Activated CD8-positive, alpha-beta T cell treated with anti-CD3 and anti-CD28 coated beads for 36 hours (primary cell): ENCODE measurements at regions of chr5 and their contacts with region 1.

Region 1: DNA sequence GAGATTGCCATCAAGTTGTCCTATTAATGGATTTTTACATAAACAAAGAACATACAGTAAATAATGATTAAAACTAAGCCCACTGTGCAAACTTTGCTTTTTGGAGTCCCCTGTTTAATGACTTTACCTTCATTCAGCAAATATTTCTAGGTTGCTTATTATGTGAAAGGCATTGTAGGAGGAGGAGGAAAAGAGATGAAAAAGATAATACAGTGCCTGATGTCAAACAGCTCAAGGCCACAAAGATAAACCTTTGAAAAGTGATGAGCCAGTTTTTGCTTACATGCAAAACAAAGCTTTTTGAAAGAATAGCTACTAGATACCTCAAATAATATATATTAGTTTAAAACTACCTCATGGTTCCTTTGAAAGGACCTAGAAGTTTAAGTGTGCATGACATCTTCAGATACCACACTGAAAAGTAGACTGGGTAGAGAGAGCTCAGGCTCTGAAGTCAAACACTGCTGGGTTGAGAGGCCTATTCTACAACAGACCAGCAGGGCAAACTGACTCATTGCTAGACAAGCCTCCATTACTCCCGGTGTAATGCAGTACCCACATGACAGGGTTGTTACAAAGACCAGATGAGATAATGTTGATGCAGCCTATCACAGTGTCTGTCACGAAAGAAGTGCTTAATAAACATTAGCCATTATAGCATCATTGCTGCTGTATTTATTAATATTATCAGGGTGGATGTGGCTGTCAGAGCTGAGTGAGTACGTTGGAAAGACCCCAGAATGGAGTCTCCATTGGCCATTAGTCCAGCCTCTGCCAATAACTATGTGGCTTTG is 11.8 kb downstream of the DEPDC1B start:
- DNase-seq: peak; percentile 8
- ATAC-seq: peak; percentile 77
- H3K4me3 Mint-ChIP-seq: no peak overlapping the region
- H3K27ac Mint-ChIP-seq: no peak overlapping the region
- H3K4me1 Mint-ChIP-seq: no peaks in the 10 kb centered on the region
- H3K27me3 Mint-ChIP-seq: no peaks in the 10 kb centered on the region
- CTCF ChIP-seq: no peak

Region 2: DNA sequence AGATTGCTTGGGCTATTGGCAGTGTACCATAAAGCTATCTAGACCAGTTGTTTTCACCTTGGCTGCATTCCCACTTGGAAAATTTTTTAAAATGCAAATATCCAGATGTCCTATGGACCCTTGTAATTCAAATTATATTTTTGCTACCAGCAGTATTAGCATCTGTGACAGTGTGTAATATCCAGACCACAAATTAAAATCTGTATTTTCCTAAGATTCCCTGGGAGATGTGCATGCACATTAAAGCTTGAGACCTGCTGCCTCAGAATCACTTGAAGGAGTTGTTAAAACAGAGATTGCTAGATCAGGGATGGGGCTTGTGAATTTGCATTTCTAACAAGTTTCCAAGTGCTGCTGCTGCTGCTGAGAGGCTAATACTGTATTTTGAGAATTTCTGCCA is 413.4 kb before region 1 on chr5:
- CTCF ChIA-PET with region 1: no interaction called
- POLR2A ChIA-PET with region 1: no interaction called
- intact Hi-C with region 1: no loop called
- DNase-seq: no peak
- ATAC-seq: no peak
- H3K4me3 Mint-ChIP-seq: no peak overlapping the region
- H3K27ac Mint-ChIP-seq: no peak overlapping the region
- H3K4me1 Mint-ChIP-seq: no peaks in the 10 kb centered on the region
- H3K27me3 Mint-ChIP-seq: no peaks in the 10 kb centered on the region
- CTCF ChIP-seq: no peak

Region 3: GRCh38 chr5:60699530-60700382 is 11.6 kb after region 1 on chr5 and contains the start of gene DEPDC1B:
- CTCF ChIA-PET with region 1: interaction called, 20 read pairs
- POLR2A ChIA-PET with region 1: interaction called, 14 read pairs
- intact Hi-C with region 1: no loop called
- DNase-seq: peak; percentile 90
- ATAC-seq: peak; percentile 95
- H3K4me3 Mint-ChIP-seq: peak within 1 kb of the TSS; percentile 79
- H3K27ac Mint-ChIP-seq: peak within 1 kb of the TSS; percentile 84
- H3K4me1 Mint-ChIP-seq: peaks cover 18% of the 10 kb centered on the region
- H3K27me3 Mint-ChIP-seq: peaks cover 4% of the 10 kb centered on the region
- CTCF ChIP-seq: no peak
- total RNA-seq, gene DEPDC1B: 30.2 to 34.1 TPM

Region 4: GRCh38 chr5:60805470-60805869 is 117.3 kb after region 1 on chr5:
- CTCF ChIA-PET with region 1: no interaction called
- POLR2A ChIA-PET with region 1: no interaction called
- intact Hi-C with region 1: no loop called
- DNase-seq: no peak
- ATAC-seq: no peak
- H3K4me3 Mint-ChIP-seq: no peak overlapping the region
- H3K27ac Mint-ChIP-seq: no peak overlapping the region
- H3K4me1 Mint-ChIP-seq: no peaks in the 10 kb centered on the region
- H3K27me3 Mint-ChIP-seq: peaks cover 4% of the 10 kb centered on the region
- CTCF ChIP-seq: no peak